BJ (cell line): ENCODE measurements at regions of chr1 and their contacts with region 1.

Region 1: DNA sequence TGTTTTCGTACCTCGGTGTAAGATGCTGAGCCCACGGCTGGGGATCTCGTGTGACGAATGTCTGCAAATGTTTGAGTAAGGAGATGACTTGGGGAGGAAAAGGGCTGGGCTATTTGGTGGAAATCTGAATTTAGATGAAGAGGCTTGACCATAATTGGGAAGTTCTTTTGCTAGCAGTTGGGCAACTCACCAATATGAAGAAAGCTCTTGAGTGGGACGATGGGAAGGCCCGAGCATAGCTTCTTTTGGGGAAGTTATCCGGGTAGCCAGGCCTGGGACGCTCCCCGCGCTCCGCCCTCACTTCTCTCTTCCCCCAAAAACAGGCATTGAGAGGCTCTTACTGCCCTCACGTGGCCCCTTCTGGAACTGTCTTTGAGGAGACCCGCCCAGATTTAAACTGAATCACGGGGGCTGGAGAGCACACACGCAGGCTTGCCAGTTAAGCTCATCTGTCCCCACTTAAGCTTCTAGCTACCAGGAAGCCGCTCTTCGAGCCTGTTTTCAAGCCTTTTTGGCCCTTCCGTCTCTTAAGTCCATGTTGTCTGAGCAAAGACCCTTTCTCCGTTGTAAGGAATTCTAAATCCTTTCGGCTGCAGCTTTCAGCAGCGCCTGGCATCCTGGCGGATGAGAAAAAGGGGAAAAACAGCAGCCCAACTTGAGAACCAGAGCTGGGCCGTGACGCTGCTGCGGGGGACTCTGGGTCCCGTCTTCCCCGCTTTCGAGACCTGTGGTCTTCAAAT is 93.1 kb downstream of the NID1 start:
- DNase-seq: peak; percentile 88
- H3K4me3 ChIP-seq: peak overlapping the region; percentile 22
- H3K27me3 ChIP-seq: no peaks in the 10 kb centered on the region
- CTCF ChIP-seq: peak; percentile 85

Region 2: GRCh38 chr1:235783148-235783776 is 188.5 kb before region 1 on chr1:
- CTCF ChIA-PET with region 1: interaction called, 10 read pairs
- POLR2A ChIA-PET with region 1: no interaction called
- DNase-seq: peak; percentile 24
- H3K4me3 ChIP-seq: no peak overlapping the region
- H3K27me3 ChIP-seq: no peaks in the 10 kb centered on the region
- CTCF ChIP-seq: peak; percentile 38

Region 3: GRCh38 chr1:235866913-235867845 is 104.6 kb before region 1 on chr1:
- CTCF ChIA-PET with region 1: interaction called, 37 read pairs
- POLR2A ChIA-PET with region 1: interaction called, 5 read pairs
- DNase-seq: peak; percentile 39
- H3K4me3 ChIP-seq: peak overlapping the region; percentile 79
- H3K27me3 ChIP-seq: no peaks in the 10 kb centered on the region
- CTCF ChIP-seq: no peak

Region 4: GRCh38 chr1:235917267-235917811 is 54.4 kb before region 1 on chr1:
- CTCF ChIA-PET with region 1: interaction called, 15 read pairs
- POLR2A ChIA-PET with region 1: no interaction called
- DNase-seq: peak; percentile 98
- H3K4me3 ChIP-seq: no peak overlapping the region
- H3K27me3 ChIP-seq: no peaks in the 10 kb centered on the region
- CTCF ChIP-seq: no peak

Region 5: GRCh38 chr1:235955777-235956176 is 16.0 kb before region 1 on chr1:
- CTCF ChIA-PET with region 1: interaction called, 24 read pairs
- POLR2A ChIA-PET with region 1: no interaction called
- DNase-seq: no peak
- H3K4me3 ChIP-seq: no peak overlapping the region
- H3K27me3 ChIP-seq: no peaks in the 10 kb centered on the region
- CTCF ChIP-seq: no peak

Region 6: GRCh38 chr1:235984041-235984825 is 12.5 kb after region 1 on chr1:
- CTCF ChIA-PET with region 1: interaction called, 12 read pairs
- POLR2A ChIA-PET with region 1: interaction called, 27 read pairs
- DNase-seq: peak; percentile 78
- H3K4me3 ChIP-seq: no peak overlapping the region
- H3K27me3 ChIP-seq: no peaks in the 10 kb centered on the region
- CTCF ChIP-seq: no peak